H1 (cell line): ENCODE measurements at regions of chr5 and their contacts with region 1.

Region 1: DNA sequence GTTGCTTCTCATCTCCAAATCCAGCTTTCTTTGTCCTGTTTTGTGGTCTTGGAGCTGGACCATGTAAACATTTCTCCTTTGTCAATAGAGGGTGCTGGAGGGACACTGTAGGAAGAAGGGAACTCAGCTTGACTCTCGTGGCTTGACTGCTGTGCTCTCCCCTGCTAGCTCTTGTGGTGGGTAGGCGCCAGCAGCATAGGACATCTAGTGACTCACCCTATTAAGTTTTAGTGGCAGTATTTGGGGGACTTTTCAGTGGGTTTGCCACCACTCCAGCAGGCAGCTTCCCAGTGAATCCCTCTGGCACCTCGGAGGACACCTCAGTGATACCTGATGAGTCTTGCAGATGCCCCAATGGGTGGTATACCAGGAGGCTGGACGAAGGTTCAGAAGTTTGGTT is 97.8 kb downstream of the TSSK1B start:
- DNase-seq: peak; percentile 10 to 55
- H3K4me3 ChIP-seq: no peak overlapping the region
- H3K27ac ChIP-seq: no peak overlapping the region
- H3K4me1 ChIP-seq: no peaks in the 10 kb centered on the region
- H3K27me3 ChIP-seq: no peaks in the 10 kb centered on the region
- CTCF ChIP-seq: peak in 2 of 3 experiments; percentile 48 to 58; a peak in 3 of 4 replicates
- EP300 ChIP-seq: no peak
- POLR2A ChIP-seq: no peak
- RAD21 ChIP-seq: peak; percentile 70 to 80

Region 2: GRCh38 chr5:113513384-113514288 is 176.7 kb after region 1 on chr5 and contains the start of gene YTHDC2:
- CTCF ChIA-PET with region 1: interaction called, 11 read pairs
- POLR2A ChIA-PET with region 1: no interaction called
- DNase-seq: peak; percentile 51 to 91
- H3K4me3 ChIP-seq: peak within 1 kb of the TSS; percentile 55 to 78 (median 72)
- H3K27ac ChIP-seq: peak within 1 kb of the TSS; percentile 62; the same call in 1 of the 2 replicates
- H3K4me1 ChIP-seq: peaks cover 0 to 5% (median 2%) of the 10 kb centered on the region in 4 experiments; a peak in 3 of 7 replicates
- H3K27me3 ChIP-seq: no peaks in the 10 kb centered on the region
- CTCF ChIP-seq: peak; percentile 59 to 79 (median 66)
- EP300 ChIP-seq: no peak
- POLR2A ChIP-seq: peak; percentile 55 to 89
- RAD21 ChIP-seq: peak; percentile 84 to 85
- total RNA-seq, gene YTHDC2: 19.2 and 20.1 TPM in 2 replicates

Region 3: DNA sequence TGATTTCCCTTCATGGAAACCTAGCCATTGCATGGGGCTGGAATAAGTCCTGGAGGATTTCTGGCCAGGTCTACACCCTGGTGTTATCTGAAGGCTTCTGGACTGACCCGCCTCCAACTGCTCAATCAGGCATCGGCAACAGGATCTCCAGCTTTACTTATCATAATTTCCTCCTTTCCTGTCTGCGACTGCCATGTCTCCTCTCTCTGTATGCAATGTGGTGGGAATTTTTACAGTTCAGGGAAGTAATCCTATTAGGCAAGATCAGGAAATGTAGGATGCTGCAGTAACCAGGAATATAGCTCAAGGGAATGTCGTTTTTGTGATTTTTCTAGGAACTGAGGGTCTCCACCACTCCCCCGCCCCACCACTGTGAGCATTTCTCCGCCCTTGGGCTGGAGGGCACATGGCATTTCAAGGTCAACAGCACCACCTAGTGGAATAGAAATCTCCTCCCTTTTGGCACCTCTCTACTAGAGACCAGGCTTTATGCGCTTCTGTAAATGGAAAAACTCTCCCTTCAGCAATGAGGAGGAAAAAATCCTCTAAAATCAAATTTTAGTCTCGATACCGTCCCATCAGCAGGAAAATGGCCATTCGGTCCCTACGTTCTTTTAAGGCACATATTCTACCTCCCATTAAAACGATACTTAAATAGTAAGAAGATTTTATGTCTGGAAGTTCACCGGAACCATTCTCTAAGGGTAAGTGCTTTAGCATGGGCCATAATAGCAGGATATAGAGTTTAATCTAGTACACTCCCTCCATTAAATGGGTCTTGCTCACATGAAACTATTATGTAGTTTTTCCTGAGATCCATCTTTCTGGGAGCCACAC is 269.5 kb after region 1 on chr5:
- CTCF ChIA-PET with region 1: interaction called, 19 read pairs
- POLR2A ChIA-PET with region 1: no interaction called
- DNase-seq: peak; percentile 23 to 73
- H3K4me3 ChIP-seq: no peak overlapping the region
- H3K27ac ChIP-seq: no peak overlapping the region
- H3K4me1 ChIP-seq: no peaks in the 10 kb centered on the region; a peak in 2 of 7 replicates
- H3K27me3 ChIP-seq: no peaks in the 10 kb centered on the region
- CTCF ChIP-seq: peak; percentile 49 to 86 (median 86)
- EP300 ChIP-seq: no peak
- POLR2A ChIP-seq: no peak
- RAD21 ChIP-seq: peak; percentile 97